ENCODE measurements at regions of chr7 and their contacts with region 1.

Region 1: GRCh38 chr7:17275749-17276671 is 22.4 kb upstream of the AHR start:
- DNase-seq: peak; percentile 92
- ATAC-seq: peak; percentile 91
- H3K4me3 ChIP-seq: peak overlapping the region; percentile 8; the same call in 1 of the 2 replicates
- H3K27ac ChIP-seq: peak overlapping the region; percentile 78
- H3K4me1 ChIP-seq: peaks cover 34% of the 10 kb centered on the region
- H3K27me3 ChIP-seq: no peaks in the 10 kb centered on the region
- CTCF ChIP-seq: no peak

Region 2: DNA sequence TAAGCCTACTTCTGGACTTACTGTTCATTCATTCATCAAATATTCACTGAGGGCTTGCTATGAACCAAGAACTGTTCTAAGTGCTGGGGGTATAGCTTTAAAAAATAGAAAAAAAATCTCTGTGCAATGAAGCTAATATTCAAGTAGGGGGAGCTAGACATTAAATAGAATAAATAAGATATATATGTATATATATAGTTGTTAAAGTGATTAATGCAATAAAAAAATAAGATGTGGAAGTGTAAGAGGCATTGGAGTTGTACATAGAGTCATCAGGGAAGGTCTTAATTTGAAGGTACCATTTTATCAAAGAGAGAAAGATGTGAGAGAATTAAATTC is 213.0 kb before region 1 on chr7:
- CTCF ChIA-PET with region 1: no interaction called
- POLR2A ChIA-PET with region 1: no interaction called
- intact Hi-C with region 1: loop called (anchors 5 kb)
- DNase-seq: peak; percentile 48
- ATAC-seq: 0 out of 2 replicates have a peak, but pooled peaks have one; percentile 8
- H3K4me3 ChIP-seq: no peak overlapping the region
- H3K27ac ChIP-seq: 0 out of 2 replicates have a peak overlapping the region, but pooled peaks have one; percentile 1
- H3K4me1 ChIP-seq: peaks cover 47% of the 10 kb centered on the region
- H3K27me3 ChIP-seq: no peaks in the 10 kb centered on the region
- CTCF ChIP-seq: peak; percentile 36; the same call in 1 of the 2 replicates

Region 3: DNA sequence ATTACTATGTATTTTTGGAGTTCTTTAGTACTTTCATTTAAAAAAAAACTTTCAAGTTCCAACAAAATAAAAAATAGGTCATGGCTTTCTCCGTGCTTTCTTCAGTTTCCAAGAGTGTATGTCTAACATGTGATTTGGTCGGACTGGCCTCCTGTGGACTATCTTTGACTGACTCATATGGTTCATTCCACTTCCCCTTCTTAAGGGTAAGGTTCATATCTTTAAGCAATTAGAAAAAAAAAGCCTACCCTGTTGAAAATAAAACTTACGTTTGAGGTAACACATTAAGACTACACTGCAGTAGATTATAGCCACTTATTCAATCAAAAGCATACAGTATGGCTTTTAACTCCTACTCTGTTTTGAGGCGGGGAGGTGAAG is 90.3 kb before region 1 on chr7:
- CTCF ChIA-PET with region 1: no interaction called
- POLR2A ChIA-PET with region 1: no interaction called
- intact Hi-C with region 1: loop called (anchors 2 kb)
- DNase-seq: peak; percentile 65
- ATAC-seq: peak; percentile 93
- H3K4me3 ChIP-seq: no peak overlapping the region
- H3K27ac ChIP-seq: peak overlapping the region; percentile 85
- H3K4me1 ChIP-seq: peaks cover 22% of the 10 kb centered on the region
- H3K27me3 ChIP-seq: no peaks in the 10 kb centered on the region
- CTCF ChIP-seq: no peak

Measured in PC-3 (cell line).